ENCODE measurements at regions of chr10 and their contacts with region 1.

Region 1: GRCh38 chr10:77641788-77642397 is 4.3 kb upstream of the KCNMA1 start:
- DNase-seq: peak in 5 of 10 donors; percentile 55 to 84 (median 58)
- H3K4me3 ChIP-seq: peak overlapping the region in 2 of 59 donors; percentile 7 to 23
- H3K27ac ChIP-seq: peak overlapping the region in 2 of 59 donors; percentile 7 to 24
- H3K27me3 ChIP-seq: peaks cover 0 to 27% (median 3%) of the 10 kb centered on the region in 45 donors
- CTCF ChIP-seq: peak; percentile 81 to 99 (median 93)

Region 2: DNA sequence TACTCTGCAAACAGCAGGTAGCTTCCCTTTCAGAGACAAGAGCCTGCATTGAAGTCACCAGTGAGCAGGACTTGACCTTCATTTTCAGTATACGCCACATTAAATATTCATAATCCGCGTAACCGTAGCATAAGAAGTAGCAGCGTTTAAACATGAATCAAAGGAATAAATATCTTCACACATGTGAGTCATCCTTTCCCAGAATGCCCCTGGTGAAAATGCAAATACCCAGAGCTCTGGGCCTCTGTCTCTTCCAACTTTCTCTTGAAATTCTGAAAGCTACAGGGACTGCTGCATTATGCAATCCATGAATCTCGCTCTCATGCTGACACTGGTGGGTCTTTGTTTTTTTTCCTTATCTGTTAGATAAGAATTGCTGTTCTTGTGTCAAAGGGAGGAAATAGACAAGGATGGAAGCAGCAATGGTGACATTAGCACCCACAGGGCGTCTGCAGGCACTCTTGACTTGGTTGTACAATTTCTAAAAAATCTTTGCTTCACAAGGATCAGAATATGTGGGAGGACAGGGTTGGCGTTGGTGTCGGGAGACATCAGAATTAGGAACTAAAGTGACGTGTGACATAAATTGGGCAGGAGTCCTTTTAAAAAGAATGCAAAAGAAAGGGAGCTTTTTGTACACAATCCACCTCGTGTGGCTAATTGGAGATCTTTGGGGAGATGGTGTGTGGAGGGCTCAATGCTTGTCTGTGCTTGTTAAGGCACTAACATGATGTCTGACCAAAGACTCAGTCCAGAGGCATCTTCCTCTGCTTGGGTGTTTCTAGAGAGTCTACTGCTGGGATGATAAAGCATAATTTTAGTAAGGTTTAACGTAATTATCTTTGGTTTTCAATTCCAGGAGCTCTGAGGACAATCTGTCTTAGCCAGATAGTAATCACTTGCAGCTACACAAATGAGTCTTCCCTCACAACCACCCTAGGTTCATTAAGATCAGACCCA is 394.6 kb before region 1 on chr10:
- intact Hi-C with region 1: loop called in 1 of 2 experiments (anchors 10 kb)
- DNase-seq: no peak
- H3K4me3 ChIP-seq: peak overlapping the region in 1 of 59 donors; percentile 1
- H3K27ac ChIP-seq: peak overlapping the region in 51 of 59 donors; percentile 0 to 84 (median 57)
- H3K27me3 ChIP-seq: no peaks in the 10 kb centered on the region
- CTCF ChIP-seq: no peak

Region 3: DNA sequence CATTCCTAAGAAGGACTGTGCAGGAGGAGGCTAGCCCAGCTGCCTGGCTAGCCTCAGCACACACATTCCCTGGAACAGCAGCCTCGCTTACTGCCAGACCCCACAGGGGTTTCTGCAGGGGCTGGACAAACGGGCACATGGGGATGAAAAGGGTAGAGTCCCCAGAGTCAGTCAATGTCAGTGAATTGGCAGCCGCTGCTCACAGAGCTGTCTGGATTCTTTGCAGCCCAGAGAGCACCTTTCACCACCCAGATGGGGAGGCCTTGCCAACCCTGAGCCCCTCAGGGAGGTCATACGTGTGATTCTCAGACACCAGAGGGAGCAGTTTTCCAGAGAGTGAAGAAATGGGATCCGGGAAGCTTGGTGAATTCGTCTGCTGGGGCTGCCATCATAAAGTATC is 147.6 kb before region 1 on chr10:
- intact Hi-C with region 1: loop called in 1 of 2 experiments (anchors 10 kb)
- DNase-seq: no peak
- H3K4me3 ChIP-seq: no peak overlapping the region
- H3K27ac ChIP-seq: peak overlapping the region in 1 of 59 donors; percentile 23
- H3K27me3 ChIP-seq: no peaks in the 10 kb centered on the region
- CTCF ChIP-seq: peak in 45 of 56 donors; percentile 6 to 58 (median 33)

Region 4: GRCh38 chr10:77513781-77514331 is 128.0 kb before region 1 on chr10:
- intact Hi-C with region 1: loop called in 1 of 2 experiments (anchors 5 kb)
- DNase-seq: peak in 7 of 10 donors; percentile 60 to 85 (median 66)
- H3K4me3 ChIP-seq: no peak overlapping the region
- H3K27ac ChIP-seq: peak overlapping the region in 42 of 59 donors; percentile 2 to 79 (median 56)
- H3K27me3 ChIP-seq: no peaks in the 10 kb centered on the region
- CTCF ChIP-seq: no peak

Measured in dorsolateral prefrontal cortex (tissue), 120 donors.